Activated T-helper 1 cell treated with anti-CD3 and anti-CD28 coated beads, Interleukin-12 subunit alpha, Interleukin-12 subunit beta, Interleukin-2, Interleukin-4 antibody, amounts not matched to agents 30 ng/mL and 10 ng/mL and 1 ng/mL, durations not matched to agents 14 hours and 24 hours and 36 hours (primary cell): ENCODE measurements at regions of chr4 and their contacts with region 1.

Region 1: DNA sequence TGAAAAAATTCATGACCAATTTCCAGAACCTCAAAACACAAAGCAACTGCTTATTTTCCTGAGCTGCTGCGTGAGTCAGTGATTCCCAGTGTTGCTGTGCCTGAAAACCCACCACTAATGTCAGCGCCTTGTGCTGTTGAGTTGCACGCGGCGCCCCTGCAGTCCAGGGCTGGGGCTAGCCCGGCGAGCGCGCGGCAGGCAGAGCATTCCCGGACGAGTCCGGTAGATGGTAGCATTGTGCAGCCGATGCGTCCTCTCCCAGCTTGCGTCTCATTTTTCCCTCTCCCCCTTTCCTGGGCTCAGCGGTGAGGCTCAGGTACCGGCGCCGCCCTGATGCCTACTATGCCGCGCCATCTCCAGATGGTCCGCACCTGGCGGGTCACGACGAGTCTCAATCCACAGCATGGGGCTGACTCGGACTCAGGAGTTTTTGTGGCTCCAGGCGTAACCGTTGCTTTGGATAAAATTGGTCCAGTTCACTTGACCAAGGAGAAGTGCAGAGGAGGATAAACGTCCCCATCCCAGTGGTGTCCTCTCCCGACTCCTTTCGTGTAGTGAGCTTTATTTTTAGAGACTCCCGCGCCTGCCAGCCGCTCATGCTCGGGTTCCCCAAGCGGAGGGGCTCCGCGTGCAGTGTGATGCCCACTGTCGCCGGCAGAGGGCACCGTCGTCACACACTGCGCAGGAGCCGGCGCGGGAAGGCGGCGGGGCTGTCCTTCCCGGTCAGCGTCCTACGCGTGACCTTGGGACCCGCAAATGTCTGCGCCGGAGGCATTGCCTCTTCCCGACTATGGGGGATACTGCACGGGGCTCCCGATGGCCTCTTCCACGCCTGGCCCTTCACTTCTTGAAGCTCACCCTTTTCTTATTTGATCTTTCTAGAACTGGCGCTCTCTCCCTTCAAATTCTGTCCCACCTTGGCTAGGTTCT is 53.6 kb upstream of the IGFBP7 start:
- DNase-seq: peak; percentile 59
- H3K4me3 Mint-ChIP-seq: peak overlapping the region; percentile 85
- H3K27ac Mint-ChIP-seq: peak overlapping the region; percentile 83
- H3K4me1 Mint-ChIP-seq: peaks cover 18% of the 10 kb centered on the region
- H3K27me3 Mint-ChIP-seq: peaks cover 14% of the 10 kb centered on the region

Region 2: GRCh38 chr4:57147335-57148060 is 16.3 kb before region 1 on chr4:
- intact Hi-C with region 1: no loop called
- DNase-seq: no peak
- H3K4me3 Mint-ChIP-seq: no peak overlapping the region
- H3K27ac Mint-ChIP-seq: no peak overlapping the region
- H3K4me1 Mint-ChIP-seq: no peaks in the 10 kb centered on the region
- H3K27me3 Mint-ChIP-seq: no peaks in the 10 kb centered on the region

Region 3: DNA sequence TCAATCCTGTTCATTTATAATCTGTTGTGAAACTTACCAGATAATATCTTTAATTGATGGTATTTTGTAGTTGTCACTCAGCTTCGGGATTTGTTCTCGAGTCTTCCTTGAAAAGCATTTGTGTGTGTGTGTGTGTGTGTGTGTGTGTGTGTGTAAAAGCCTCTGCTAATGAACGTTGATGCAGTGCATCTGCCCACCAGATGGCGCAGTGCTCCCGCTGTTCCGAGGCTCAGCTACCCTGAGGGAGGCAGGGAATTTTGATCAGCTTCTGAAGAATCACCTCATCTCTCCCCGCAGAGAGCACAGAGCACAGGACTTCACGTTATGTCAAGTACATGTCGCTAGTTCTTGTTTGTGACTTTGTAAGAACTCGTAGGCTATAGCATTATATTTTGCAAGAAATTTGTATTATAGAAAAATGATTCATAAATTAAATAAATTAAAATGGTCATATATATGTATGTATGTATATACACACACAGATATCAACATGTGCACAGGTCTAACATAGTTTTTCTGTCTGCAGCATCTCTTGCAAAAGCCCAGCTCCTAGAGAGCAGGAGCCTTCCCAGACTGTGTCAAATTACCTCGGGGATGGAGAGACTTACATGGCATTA is 263.1 kb after region 1 on chr4:
- intact Hi-C with region 1: loop called (anchors 10 kb)
- DNase-seq: peak; percentile 4
- H3K4me3 Mint-ChIP-seq: no peak overlapping the region
- H3K27ac Mint-ChIP-seq: no peak overlapping the region
- H3K4me1 Mint-ChIP-seq: no peaks in the 10 kb centered on the region
- H3K27me3 Mint-ChIP-seq: no peaks in the 10 kb centered on the region